Esophagus muscularis mucosa (tissue), 4 donors: ENCODE measurements at regions of chr15 and their contacts with region 1.

Region 1: GRCh38 chr15:91022075-91022835 is at the start of gene VPS33B:
- DNase-seq: peak; percentile 93
- H3K4me3 ChIP-seq: peak within 1 kb of the TSS; percentile 75 to 91 (median 86)
- H3K27ac ChIP-seq: peak within 1 kb of the TSS; percentile 69 to 81 (median 78)
- H3K4me1 ChIP-seq: peaks cover 18 to 40% (median 33%) of the 10 kb centered on the region in 4 donors
- H3K27me3 ChIP-seq: no peaks in the 10 kb centered on the region
- CTCF ChIP-seq: peak in 1 of 3 experiments; percentile 10
- EP300 ChIP-seq: no peak
- POLR2A ChIP-seq: no peak
- total RNA-seq, gene VPS33B: 9.5 to 11.4 (median 10.4) TPM

Region 2: GRCh38 chr15:90872486-90873379 is 149.5 kb before region 1 on chr15:
- intact Hi-C with region 1: no loop called
- DNase-seq: no peak
- H3K4me3 ChIP-seq: peak overlapping the region; percentile 83 to 100 (median 92)
- H3K27ac ChIP-seq: peak overlapping the region; percentile 92 to 96 (median 96)
- H3K4me1 ChIP-seq: peaks cover 46 to 62% (median 49%) of the 10 kb centered on the region in 4 donors
- H3K27me3 ChIP-seq: no peaks in the 10 kb centered on the region
- CTCF ChIP-seq: no peak
- EP300 ChIP-seq: no peak
- POLR2A ChIP-seq: no peak

Region 3: DNA sequence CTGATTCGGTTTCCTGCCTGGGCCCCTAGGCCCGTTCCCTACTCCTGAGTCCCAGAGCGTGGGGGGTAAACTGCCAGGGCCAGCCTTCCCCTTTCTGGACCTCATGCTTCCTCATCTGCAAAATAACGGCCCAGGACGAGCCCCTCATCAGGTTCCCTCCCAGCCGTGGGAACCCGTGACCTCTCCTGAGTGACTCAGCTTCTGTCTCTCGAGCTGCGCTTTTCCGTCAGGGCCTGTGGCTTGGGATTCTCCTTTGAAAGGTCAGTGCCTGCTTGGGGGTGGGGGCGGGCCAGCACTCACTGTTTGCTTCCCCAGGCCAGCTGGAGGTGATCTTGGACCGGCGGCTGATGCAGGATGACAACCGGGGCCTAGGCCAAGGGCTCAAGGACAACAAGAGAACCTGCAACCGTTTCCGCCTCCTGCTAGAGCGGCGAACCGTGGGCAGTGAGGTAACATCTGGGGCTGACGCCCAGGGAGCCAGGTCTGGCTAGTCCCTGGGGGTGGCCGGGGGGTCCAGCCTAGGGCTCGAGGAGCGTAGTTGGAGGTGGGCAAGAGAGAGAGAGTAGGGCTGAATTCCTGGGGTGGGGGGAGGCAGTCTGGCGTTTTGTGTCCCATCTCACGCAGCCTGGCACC is 106.3 kb before region 1 on chr15:
- intact Hi-C with region 1: no loop called
- DNase-seq: no peak
- H3K4me3 ChIP-seq: no peak overlapping the region
- H3K27ac ChIP-seq: no peak overlapping the region
- H3K4me1 ChIP-seq: peaks cover 0 to 10% (median 0%) of the 10 kb centered on the region in 4 donors
- H3K27me3 ChIP-seq: no peaks in the 10 kb centered on the region
- CTCF ChIP-seq: no peak
- EP300 ChIP-seq: no peak
- POLR2A ChIP-seq: no peak

Region 4: GRCh38 chr15:90994417-90995311 is 27.6 kb before region 1 on chr15 and contains the start of gene PRC1:
- intact Hi-C with region 1: loop called (anchors 2 kb)
- DNase-seq: peak; percentile 99
- H3K4me3 ChIP-seq: peak within 1 kb of the TSS; percentile 79 to 92 (median 87)
- H3K27ac ChIP-seq: peak within 1 kb of the TSS; percentile 88 to 93 (median 89)
- H3K4me1 ChIP-seq: peaks cover 0 to 21% (median 19%) of the 10 kb centered on the region in 4 donors
- H3K27me3 ChIP-seq: no peaks in the 10 kb centered on the region
- CTCF ChIP-seq: no peak
- EP300 ChIP-seq: no peak
- POLR2A ChIP-seq: no peak
- total RNA-seq, gene PRC1: 4.0 to 5.8 (median 4.6) TPM